GM10248 (cell line): ENCODE measurements at regions of chr12 and their contacts with region 1.

Region 1: GRCh38 chr12:82685790-82686167 is 927 bp upstream of the TMTC2 start:
- DNase-seq: peak; percentile 81
- CTCF ChIP-seq: peak; percentile 93

Region 2: GRCh38 chr12:82358200-82359114 is 327.3 kb before region 1 on chr12 and contains the starts of genes CCDC59 and METTL25:
- CTCF ChIA-PET with region 1: interaction called, 15 read pairs
- POLR2A ChIA-PET with region 1: interaction called, 4 read pairs
- DNase-seq: peak; percentile 91
- CTCF ChIP-seq: peak; percentile 77

Region 3: DNA sequence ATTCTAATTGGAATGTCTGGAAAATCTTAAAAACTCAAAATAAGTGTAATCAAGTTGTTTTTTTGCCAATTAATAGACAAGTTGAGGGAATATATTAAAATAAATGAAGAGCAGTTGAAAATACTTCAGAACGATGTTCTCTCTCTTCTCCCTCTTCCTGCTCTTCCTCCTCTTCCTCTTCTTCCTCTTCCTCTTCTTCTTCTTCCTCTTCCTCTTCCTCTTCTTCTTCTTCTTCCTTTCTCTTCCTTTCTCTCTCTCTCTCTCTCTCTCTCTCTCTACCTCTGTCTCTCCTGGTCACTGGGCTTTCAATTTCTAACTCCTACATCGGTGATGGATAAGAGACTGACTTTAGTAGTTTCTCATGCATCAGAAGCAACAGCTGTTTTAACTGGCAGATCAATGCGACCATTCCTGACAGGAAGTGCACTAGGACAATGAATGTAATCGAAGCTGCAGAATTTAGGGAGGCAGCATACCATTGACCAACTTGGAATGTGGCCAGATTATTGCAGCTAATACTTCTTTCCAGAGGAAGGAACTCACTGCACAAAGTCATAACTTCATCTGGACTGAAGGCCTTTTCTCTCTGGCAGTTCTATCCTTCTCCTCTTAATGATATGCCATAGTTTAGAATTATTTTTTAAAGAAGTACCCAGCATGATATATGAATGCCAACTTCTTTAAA is 12.8 kb before region 1 on chr12:
- CTCF ChIA-PET with region 1: interaction called, 74 read pairs
- POLR2A ChIA-PET with region 1: no interaction called
- DNase-seq: no peak
- CTCF ChIP-seq: no peak

Region 4: GRCh38 chr12:82842480-82842879 is 156.7 kb after region 1 on chr12:
- CTCF ChIA-PET with region 1: interaction called, 12 read pairs
- POLR2A ChIA-PET with region 1: no interaction called
- DNase-seq: no peak
- CTCF ChIP-seq: no peak

Region 5: GRCh38 chr12:83389237-83389996 is 703.6 kb after region 1 on chr12:
- CTCF ChIA-PET with region 1: interaction called, 33 read pairs
- POLR2A ChIA-PET with region 1: no interaction called
- DNase-seq: no peak
- CTCF ChIP-seq: peak; percentile 32

Region 6: DNA sequence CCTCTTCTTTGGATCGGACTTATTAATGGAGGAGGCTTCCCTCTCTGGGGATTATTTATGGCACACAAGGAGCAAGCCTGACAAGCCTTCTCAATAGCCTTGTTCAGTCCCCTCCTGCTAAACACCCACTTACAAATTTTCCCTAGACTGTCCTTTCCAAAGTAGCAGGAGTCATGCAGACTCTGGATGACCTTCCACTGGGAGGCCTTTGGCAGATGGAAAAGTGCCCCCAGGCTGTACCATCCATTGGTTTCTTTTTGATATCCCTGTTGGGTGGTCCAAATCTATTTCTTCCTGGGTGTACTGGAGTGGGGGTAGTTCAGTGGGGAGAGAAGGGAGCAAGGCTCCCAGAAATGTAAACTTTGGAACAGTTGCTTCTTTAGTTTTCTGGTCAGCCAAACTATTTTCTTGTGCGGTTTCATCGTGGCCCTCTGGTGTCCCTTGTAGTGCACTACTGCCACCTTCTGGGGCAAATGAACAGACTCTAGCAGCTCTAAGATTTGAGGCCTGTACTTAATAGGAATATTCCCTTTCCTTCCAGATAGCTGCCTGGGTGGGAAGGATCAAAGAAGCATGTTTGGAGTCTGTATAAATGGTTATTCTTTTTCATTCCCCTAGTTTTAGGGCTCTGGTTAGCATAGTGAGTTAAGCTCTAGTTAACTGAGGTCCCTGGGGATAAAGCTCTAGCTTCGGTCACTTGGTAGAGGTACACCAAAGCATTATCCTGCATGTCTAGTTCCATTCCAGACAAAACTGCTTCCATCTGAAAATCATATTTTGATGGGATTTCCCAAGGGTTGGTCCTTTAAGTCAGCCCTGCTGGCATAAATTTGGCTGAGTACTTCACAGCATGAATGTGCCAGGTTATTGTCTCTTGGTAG is 1817.4 kb after region 1 on chr12:
- CTCF ChIA-PET with region 1: interaction called, 27 read pairs
- POLR2A ChIA-PET with region 1: interaction called, 6 read pairs
- DNase-seq: peak; percentile 13
- CTCF ChIP-seq: peak; percentile 54